ENCODE measurements at regions of chr2 and their contacts with region 1.

Region 1: DNA sequence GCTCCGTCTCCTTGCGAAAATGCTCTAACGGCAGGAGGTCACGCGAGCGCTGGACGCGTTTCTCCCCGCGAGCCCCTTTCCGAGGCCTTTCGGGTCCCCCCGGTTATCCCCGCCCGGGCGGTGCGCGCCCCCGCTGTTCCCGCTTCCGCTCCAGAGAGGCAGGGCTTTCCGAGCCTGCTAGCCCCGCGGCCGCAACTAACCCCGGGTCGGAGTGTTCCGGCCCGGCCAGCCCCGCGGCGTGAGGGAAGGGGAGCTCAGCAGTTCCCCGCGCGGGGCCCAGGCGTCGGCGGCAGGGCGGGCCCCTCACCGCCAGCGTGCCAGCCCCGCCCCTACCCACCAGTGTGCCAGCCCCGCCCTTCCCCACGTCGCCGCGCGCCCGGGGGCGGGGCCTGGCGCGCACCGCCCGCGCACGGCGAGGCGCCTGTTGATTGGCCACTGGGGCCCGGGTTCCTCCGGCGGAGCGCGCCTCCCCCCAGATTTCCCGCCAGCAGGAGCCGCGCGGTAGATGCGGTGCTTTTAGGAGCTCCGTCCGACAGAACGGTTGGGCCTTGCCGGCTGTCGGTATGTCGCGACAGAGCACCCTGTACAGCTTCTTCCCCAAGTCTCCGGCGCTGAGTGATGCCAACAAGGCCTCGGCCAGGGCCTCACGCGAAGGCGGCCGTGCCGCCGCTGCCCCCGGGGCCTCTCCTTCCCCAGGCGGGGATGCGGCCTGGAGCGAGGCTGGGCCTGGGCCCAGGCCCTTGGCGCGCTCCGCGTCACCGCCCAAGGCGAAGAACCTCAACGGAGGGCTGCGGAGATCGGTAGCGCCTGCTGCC is at the start of gene MSH6:
- DNase-seq: peak; percentile 81 to 99 (median 90)

Region 2: GRCh38 chr2:48107326-48107925 is 324.5 kb after region 1 on chr2:
- intact Hi-C with region 1: loop called (anchors 5 kb)
- DNase-seq: no peak

Region 3: DNA sequence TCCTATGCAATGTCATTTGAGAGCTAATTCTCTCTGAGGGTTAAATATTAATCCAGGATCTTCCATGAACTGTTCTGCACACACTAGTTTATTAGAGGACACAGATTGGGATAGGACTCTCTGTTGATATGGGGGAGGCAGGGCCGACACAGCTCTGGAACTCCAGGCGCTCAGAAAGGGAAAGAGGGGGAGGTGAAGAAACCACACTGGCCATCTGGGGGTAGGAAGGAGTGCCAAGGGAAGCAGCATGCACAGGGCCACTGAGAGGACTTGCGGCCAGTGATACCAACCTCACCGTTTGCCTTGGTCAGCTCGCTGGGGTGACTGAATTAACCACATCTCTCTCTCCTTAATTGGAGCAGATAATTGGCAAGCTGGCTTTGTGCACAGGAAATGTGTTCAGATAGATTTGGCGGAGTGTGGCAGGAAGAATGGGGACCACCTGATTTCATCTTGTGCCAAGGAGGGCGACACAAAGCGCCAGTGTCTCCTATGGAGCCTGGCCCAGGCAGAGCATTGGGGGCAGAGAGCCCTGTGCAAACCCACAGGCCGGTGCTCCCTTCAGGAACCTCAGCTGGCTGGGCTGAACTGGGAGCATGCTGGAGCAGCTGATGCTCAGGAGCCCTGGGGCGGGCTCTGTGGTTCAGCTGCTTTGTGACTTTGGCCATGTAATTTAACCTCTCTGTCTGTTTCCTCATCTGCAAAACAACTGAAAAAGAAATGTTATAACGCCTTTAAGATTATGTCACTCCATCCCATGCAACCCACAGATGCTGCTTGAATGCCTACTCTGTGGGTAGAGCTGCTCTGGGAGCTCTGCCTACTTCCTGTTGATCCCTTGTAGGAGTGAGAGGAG is 632.3 kb after region 1 on chr2:
- intact Hi-C with region 1: loop called (anchors 10 kb)
- DNase-seq: peak; percentile 68 to 95 (median 75)

Measured in posterior cingulate gyrus (tissue), 11 donors.